Gastrocnemius medialis (tissue), 4 donors: ENCODE measurements at regions of chr17 and their contacts with region 1.

Region 1: GRCh38 chr17:7989781-7990655 is 12.4 kb upstream of the GUCY2D start:
- DNase-seq: peak; percentile 48 to 69
- ATAC-seq: peak; percentile 76 to 80
- H3K4me3 ChIP-seq: peak overlapping the region; percentile 52 to 95 (median 66)
- H3K27ac ChIP-seq: peak overlapping the region in 2 of 4 donors; percentile 24 to 42
- H3K4me1 ChIP-seq: peaks cover 0 to 9% of the 10 kb centered on the region in 2 donors
- H3K27me3 ChIP-seq: no peaks in the 10 kb centered on the region
- CTCF ChIP-seq: peak; percentile 84 to 98 (median 95)
- POLR2A ChIP-seq: no peak

Region 2: DNA sequence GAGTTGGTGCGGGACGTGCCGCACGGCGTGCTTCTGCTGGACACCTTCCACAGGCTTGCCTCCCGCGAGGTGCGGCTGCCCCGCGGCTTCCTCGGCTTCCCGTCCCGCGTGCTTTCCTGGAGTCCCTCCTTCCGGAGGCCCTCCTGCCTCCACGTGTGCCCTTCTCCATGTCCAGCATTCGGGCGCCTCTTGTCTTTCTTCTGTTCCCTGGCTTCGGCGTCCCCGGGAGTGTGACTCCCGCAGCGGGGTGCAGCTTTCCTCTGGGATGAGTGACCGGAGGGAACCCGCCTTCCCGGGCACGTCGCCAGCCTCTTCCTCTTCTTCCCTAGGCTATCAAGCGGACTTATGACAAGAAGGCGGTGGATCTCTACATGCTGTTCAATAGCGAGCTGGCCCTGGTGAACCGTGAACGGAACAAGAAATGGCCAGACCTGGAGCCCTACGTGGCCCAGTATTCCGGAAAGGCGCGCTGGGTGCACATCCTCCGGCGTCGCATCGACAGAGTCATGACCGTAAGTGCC is 249.5 kb before region 1 on chr17:
- in situ Hi-C with region 1: loop called in 2 of 4 experiments (anchors 25 kb)
- intact Hi-C with region 1: loop called (anchors 5 kb)
- DNase-seq: no peak
- ATAC-seq: no peak
- H3K4me3 ChIP-seq: peak overlapping the region in 3 of 4 donors; percentile 13 to 25 (median 15)
- H3K27ac ChIP-seq: no peak overlapping the region
- H3K4me1 ChIP-seq: no peaks in the 10 kb centered on the region
- H3K27me3 ChIP-seq: peaks cover 0 to 10% (median 7%) of the 10 kb centered on the region in 3 donors
- CTCF ChIP-seq: no peak
- POLR2A ChIP-seq: no peak

Region 3: DNA sequence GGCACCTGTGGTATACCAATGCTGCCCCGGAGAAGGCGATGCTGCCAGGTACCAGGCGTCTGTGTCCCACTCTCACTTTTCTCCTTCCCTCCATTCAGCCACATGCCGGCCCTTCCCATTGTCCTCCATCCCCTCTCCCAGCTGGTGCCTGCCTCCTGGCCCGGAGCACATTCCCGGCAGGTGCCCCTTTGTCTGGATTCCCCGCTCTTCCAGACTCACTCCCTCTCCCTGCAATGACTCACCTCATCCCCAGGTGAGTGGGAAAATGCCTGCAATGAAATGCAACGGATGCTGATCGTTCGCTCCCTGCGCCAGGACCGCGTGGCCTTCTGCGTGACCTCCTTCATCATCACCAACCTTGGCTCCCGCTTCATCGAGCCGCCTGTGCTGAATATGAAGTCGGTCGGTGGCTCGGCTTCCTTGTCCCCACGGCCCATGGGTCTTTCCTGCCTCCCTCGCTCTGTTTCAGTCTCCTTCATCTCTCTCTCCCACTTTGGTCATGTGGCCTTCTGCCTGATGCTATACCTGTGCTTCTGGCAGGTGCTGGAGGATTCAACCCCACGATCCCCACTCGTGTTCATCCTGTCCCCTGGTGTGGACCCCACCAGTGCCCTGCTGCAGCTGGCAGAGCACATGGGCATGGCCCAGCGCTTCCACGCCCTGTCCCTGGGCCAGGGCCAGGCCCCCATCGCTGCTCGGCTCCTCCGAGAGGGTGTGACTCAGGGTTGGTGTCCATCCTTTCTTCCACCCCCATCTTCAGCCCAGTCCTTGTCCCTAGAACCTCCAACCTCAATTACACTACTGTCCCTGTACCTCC is 166.2 kb before region 1 on chr17:
- in situ Hi-C with region 1: no loop called
- intact Hi-C with region 1: loop called (anchors 2 kb)
- DNase-seq: no peak
- ATAC-seq: no peak
- H3K4me3 ChIP-seq: no peak overlapping the region
- H3K27ac ChIP-seq: no peak overlapping the region
- H3K4me1 ChIP-seq: no peaks in the 10 kb centered on the region
- H3K27me3 ChIP-seq: no peaks in the 10 kb centered on the region
- CTCF ChIP-seq: no peak
- POLR2A ChIP-seq: no peak

Region 4: DNA sequence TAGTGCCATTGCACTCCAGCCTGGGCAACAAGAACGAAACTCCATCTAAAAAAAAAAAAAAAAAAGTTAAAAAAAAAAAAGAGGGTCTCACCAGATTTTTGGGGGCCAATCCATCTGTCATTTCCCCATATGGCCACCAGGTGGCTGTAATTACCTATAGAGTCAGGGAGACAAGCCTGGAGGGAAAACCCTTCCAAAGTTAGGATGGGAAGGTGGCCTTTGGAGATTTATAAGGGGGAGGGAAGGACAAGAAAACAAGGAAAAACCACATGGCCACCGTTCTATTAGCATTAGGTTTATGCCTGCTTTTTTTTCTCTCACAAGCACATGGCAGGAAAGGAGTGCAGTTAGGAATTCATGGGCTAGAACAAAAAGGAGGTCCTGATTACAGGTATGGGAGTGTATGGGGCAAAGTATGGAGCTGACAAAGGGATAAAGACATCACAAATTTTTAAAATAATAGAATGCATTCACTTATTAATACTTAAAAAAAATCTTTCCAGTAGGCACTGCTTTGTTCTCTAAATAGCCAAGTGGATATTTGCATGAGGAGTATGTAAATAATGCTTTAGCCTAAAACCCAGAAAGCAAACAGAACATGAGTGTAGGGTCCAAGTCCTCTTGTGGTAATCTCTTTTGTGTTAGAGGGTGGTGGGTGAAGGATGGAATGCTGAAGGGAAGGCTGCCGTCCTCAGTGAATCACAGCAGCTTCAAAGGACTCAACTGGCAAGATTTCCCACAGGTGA is 127.2 kb before region 1 on chr17:
- in situ Hi-C with region 1: loop called in 3 of 4 experiments (anchors 5 to 25 kb)
- intact Hi-C with region 1: loop called (anchors 1 kb)
- DNase-seq: no peak
- ATAC-seq: no peak
- H3K4me3 ChIP-seq: no peak overlapping the region
- H3K27ac ChIP-seq: no peak overlapping the region
- H3K4me1 ChIP-seq: peaks cover 9 to 19% of the 10 kb centered on the region in 2 donors
- H3K27me3 ChIP-seq: no peaks in the 10 kb centered on the region
- CTCF ChIP-seq: peak; percentile 76 to 88 (median 84)
- POLR2A ChIP-seq: no peak

Region 5: DNA sequence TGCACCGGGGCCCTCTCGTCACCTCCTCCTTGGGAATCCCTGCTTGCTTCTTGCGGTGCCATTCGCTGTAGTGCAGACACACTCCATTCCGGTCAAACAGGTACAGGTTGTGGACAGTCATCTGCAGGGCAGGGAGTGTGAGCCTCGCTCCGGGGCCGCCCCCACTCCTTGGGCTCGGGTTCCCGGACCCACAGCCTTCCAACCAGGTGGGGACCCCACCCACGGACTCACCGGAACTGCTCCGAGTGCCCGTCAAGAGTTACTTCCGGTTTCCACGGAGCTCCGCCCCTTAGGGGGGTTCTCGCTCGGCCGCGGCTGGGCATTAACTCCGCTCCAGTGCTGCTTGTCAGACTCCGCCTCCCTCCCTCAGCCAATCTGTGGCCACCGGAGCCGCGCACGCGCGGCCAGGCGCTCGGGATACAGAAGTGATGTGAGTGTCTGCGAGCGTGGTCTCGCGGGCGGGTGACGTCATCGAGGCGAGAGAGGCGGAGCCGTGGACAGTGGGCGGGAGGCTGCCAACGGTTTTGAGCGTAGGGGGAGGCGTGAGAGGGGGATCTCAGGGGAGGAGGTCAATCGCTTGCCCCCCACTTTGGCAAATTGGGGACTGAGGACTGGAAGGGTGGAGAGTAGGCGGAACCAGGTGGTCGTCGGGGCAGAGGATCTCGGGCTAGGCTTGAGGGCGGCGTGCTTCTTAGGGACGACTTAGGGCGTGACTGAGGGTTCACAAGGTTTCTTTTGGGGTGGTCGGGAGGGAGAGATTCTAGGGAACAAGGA is 58.1 kb before region 1 on chr17 and contains the starts of genes CNTROB and TRAPPC1:
- in situ Hi-C with region 1: loop called in 1 of 4 experiments (anchors 5 kb)
- intact Hi-C with region 1: loop called (anchors 5 kb)
- DNase-seq: peak; percentile 99 to 100
- ATAC-seq: peak; percentile 97 to 98
- H3K4me3 ChIP-seq: peak within 1 kb of the TSS; percentile 85 to 97 (median 94)
- H3K27ac ChIP-seq: peak within 1 kb of the TSS; percentile 83 to 90 (median 87)
- H3K4me1 ChIP-seq: peaks cover 17 to 19% of the 10 kb centered on the region in 2 donors
- H3K27me3 ChIP-seq: no peaks in the 10 kb centered on the region
- CTCF ChIP-seq: no peak
- POLR2A ChIP-seq: peak; percentile 78
- total RNA-seq, gene CNTROB: 3.6 to 14.3 (median 7.2) TPM
- total RNA-seq, gene TRAPPC1: 19.4 to 41.7 (median 30.0) TPM

Region 6: GRCh38 chr17:7951143-7951803 is 38.7 kb before region 1 on chr17:
- in situ Hi-C with region 1: no loop called
- intact Hi-C with region 1: no loop called
- DNase-seq: no peak
- ATAC-seq: no peak
- H3K4me3 ChIP-seq: no peak overlapping the region
- H3K27ac ChIP-seq: no peak overlapping the region
- H3K4me1 ChIP-seq: no peaks in the 10 kb centered on the region
- H3K27me3 ChIP-seq: no peaks in the 10 kb centered on the region
- CTCF ChIP-seq: no peak
- POLR2A ChIP-seq: no peak

Region 7: DNA sequence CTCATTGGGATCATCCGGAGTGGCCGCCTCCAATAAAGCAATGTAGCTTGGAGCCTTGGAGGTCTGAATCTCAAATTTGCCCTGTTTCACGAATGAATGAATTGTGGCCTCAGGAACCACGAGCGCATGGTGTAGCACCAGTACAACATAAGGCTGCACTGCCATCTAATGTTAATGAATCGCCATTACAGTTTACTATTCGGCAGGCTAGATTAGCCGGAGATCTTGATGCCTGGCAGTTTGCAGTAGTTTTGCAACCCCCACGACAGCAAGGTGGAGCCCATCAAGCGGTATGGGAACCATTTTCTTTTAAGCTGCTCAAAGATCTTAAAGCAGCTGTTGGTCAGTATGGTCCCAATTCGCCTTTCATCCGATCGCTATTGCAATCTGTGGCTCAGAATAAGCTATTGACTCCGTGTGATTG is 67.7 kb after region 1 on chr17:
- in situ Hi-C with region 1: no loop called
- intact Hi-C with region 1: loop called (anchors 5 kb)
- DNase-seq: peak; percentile 26 to 31
- ATAC-seq: peak; percentile 89 to 91
- H3K4me3 ChIP-seq: no peak overlapping the region
- H3K27ac ChIP-seq: no peak overlapping the region
- H3K4me1 ChIP-seq: peaks cover 5 to 6% of the 10 kb centered on the region in 2 donors
- H3K27me3 ChIP-seq: peaks cover 25 to 43% (median 40%) of the 10 kb centered on the region in 3 donors
- CTCF ChIP-seq: peak; percentile 40 to 80 (median 79)
- POLR2A ChIP-seq: no peak